MCF 10A (cell line): ENCODE measurements at regions of chrX and their contacts with region 1.

Region 1: GRCh38 chrX:43836435-43837184 is 45.6 kb downstream of the MAOB start:
- DNase-seq: peak; percentile 50
- H3K4me3 Mint-ChIP-seq: no peak overlapping the region
- H3K27ac Mint-ChIP-seq: no peak overlapping the region
- H3K4me1 Mint-ChIP-seq: no peaks in the 10 kb centered on the region
- H3K27me3 Mint-ChIP-seq: peaks cover 62% of the 10 kb centered on the region
- CTCF ChIP-seq: peak; percentile 55

Region 2: GRCh38 chrX:43218198-43218597 is 618.4 kb before region 1 on chrX:
- CTCF ChIA-PET with region 1: no interaction called
- POLR2A ChIA-PET with region 1: no interaction called
- intact Hi-C with region 1: no loop called
- DNase-seq: no peak
- H3K4me3 Mint-ChIP-seq: no peak overlapping the region
- H3K27ac Mint-ChIP-seq: no peak overlapping the region
- H3K4me1 Mint-ChIP-seq: no peaks in the 10 kb centered on the region
- H3K27me3 Mint-ChIP-seq: peaks cover 35% of the 10 kb centered on the region
- CTCF ChIP-seq: no peak

Region 3: GRCh38 chrX:43939187-43939926 is 102.7 kb after region 1 on chrX:
- CTCF ChIA-PET with region 1: interaction called, 18 read pairs
- POLR2A ChIA-PET with region 1: interaction called, 3 read pairs
- intact Hi-C with region 1: loop called (anchors 2 kb)
- DNase-seq: peak; percentile 16
- H3K4me3 Mint-ChIP-seq: no peak overlapping the region
- H3K27ac Mint-ChIP-seq: no peak overlapping the region
- H3K4me1 Mint-ChIP-seq: no peaks in the 10 kb centered on the region
- H3K27me3 Mint-ChIP-seq: peaks cover 71% of the 10 kb centered on the region
- CTCF ChIP-seq: peak; percentile 14

Region 4: DNA sequence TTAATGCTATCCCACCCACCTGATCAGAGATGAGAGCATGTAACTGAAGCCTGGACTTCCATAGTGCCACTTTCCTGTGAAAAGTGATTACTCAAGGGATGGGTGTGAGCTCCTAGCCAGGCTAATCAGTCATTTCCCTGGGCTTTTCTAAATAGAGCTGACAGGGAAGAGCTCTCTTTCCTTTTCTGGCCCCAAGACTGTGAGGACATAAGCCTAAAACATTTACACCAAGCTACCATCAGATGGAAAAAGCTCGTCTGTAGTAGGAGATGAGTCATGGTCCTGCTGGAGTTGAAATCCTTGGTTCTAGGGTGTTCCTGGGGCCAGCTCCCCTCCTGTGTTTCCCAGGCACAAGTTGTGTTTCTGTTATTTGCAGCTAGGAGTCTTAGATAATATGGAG is 188.9 kb after region 1 on chrX:
- CTCF ChIA-PET with region 1: interaction called, 3 read pairs
- POLR2A ChIA-PET with region 1: no interaction called
- intact Hi-C with region 1: loop called (anchors 5 kb)
- DNase-seq: no peak
- H3K4me3 Mint-ChIP-seq: no peak overlapping the region
- H3K27ac Mint-ChIP-seq: no peak overlapping the region
- H3K4me1 Mint-ChIP-seq: peaks cover 5% of the 10 kb centered on the region
- H3K27me3 Mint-ChIP-seq: peaks cover 37% of the 10 kb centered on the region
- CTCF ChIP-seq: no peak

Region 5: GRCh38 chrX:44291468-44292113 is 455.0 kb after region 1 on chrX:
- CTCF ChIA-PET with region 1: no interaction called
- POLR2A ChIA-PET with region 1: no interaction called
- intact Hi-C with region 1: no loop called
- DNase-seq: no peak
- H3K4me3 Mint-ChIP-seq: no peak overlapping the region
- H3K27ac Mint-ChIP-seq: no peak overlapping the region
- H3K4me1 Mint-ChIP-seq: no peaks in the 10 kb centered on the region
- H3K27me3 Mint-ChIP-seq: peaks cover 51% of the 10 kb centered on the region
- CTCF ChIP-seq: no peak